ENCODE measurements at regions of chr14 and their contacts with region 1.

Region 1: GRCh38 chr14:23294734-23295561 is 7.7 kb downstream of the PPP1R3E start:
- H3K4me3 ChIP-seq: no peak overlapping the region
- H3K27ac ChIP-seq: no peak overlapping the region
- H3K4me1 ChIP-seq: no peaks in the 10 kb centered on the region
- CTCF ChIP-seq: peak; percentile 92

Region 2: GRCh38 chr14:23281247-23281646 is 13.7 kb before region 1 on chr14:
- CTCF ChIA-PET with region 1: interaction called, 14 read pairs
- POLR2A ChIA-PET with region 1: interaction called, 8 read pairs
- H3K4me3 ChIP-seq: no peak overlapping the region
- H3K27ac ChIP-seq: no peak overlapping the region
- H3K4me1 ChIP-seq: peaks cover 9% of the 10 kb centered on the region
- CTCF ChIP-seq: no peak